Activated CD4-positive, alpha-beta T cell treated with anti-CD3 and anti-CD28 coated beads, Interleukin-2, amount 10 ng/mL, durations not matched to agents 24 days and 14 days (primary cell): ENCODE measurements at regions of chr13 and their contacts with region 1.

Region 1: DNA sequence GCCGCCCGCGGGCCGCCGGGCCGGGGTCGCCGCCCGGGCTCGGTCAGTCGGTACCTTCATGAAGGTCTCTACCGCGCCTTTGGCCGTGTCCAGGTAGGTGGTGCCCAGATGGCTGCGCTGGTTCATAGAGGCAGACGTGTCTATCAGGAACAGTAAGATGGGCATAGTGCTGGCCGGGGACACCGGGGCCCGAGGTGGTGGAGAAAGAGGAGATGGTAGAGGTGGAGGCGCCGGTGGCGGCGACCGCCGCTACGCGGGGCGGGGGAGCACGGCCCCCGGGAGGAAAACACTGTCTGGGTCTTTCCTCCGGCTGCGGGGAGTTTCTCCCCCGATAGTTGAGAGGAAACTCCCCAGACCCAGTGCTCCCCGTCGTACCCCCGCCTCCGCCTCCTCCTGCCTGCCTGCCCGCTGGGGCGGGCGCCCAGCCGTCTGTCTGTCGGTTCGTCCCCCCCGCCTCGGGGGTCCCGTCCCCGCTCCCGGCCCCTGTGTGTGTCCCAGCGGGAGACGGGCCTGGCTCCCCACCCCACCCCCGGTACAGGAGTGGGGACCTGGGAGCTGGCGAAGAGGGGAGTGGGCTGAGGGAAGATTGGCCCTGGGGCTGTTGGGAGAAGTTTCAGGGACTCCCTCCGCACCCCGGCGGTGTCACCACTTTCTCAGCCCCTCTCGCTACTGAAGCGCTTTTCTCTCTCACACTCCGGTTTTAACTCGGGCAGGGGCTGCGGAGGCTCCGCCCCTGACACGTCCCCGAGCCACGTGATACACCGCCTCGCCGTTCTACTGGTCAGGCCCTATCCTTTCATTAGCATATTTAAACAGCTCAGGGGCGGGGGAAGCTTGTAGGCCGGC is at the start of gene INTS6:
- DNase-seq: peak; percentile 100
- H3K4me3 Mint-ChIP-seq: peak within 1 kb of the TSS; percentile 92
- H3K27ac Mint-ChIP-seq: peak within 1 kb of the TSS; percentile 97
- H3K4me1 Mint-ChIP-seq: peaks cover 31% of the 10 kb centered on the region
- H3K27me3 Mint-ChIP-seq: no peaks in the 10 kb centered on the region
- total RNA-seq, gene INTS6: 63.5 and 68.6 TPM in 2 replicates

Region 2: DNA sequence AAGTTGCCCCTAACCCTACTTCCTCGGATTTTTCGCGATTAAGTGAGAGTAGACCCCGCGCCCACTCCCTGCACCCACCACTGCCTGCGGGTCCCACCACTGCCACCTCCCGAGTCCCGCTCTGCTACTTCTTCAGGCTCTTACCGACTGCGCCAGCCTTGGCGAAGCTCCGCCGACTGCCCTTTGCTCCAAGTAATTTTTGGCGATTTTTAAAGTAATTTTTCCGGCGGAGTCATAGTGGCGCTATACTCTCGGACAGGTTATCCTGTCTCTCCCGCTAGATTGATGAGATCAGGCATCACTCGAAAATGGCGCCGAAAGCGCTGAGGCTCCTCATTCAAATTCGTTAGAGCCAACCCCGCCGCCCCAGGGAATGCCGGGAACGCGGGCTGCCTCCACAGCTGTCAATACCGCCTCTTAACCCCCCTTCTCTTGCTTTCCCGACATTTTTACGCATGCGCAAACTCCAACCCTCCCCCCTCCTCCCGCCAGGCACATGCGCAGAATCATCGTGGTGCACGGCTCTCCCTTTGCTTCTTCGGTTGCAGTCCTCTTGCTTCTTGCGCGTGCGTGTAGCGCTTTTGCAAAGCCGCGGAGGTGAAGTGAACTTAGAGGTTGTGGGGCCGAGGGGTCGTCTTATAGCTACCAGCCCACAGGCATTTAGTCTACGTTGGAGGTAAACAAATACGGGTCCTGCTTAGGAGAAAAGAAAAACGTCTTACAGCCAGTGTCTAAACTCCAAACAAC is 1370.7 kb before region 1 on chr13:
- intact Hi-C with region 1: loop called (anchors 5 kb)
- DNase-seq: peak; percentile 99
- H3K4me3 Mint-ChIP-seq: peak overlapping the region; percentile 100
- H3K27ac Mint-ChIP-seq: peak overlapping the region; percentile 100
- H3K4me1 Mint-ChIP-seq: peaks cover 45% of the 10 kb centered on the region
- H3K27me3 Mint-ChIP-seq: peaks cover 5% of the 10 kb centered on the region

Region 3: DNA sequence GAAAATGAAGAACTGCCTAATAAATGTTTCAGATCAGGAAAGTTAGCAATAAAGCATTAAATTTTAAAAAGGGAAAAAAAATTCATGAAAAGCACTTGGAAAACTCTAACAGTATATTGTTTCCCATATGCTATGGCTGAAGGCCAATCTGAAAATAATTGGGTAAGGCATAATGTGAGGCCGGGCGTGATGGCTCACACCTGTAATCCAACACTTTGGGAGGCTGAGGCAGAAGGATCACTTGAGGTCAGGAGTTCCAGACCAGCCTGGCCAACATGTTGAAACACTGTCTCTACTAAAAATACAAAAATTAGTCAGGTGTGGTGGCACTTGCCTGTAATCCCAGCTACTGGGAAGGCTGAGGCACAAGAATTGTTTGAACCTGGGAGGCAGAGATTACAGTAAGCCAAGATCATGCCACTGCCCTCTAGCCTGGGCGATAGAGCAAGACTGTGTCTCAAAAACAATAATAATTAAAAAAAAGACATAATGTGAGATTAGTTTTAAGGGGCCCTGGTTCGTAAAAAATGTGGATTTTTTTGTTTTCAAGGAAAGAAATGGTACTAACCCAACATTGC is 14.9 kb before region 1 on chr13:
- intact Hi-C with region 1: loop called (anchors 2 kb)
- DNase-seq: no peak
- H3K4me3 Mint-ChIP-seq: no peak overlapping the region
- H3K27ac Mint-ChIP-seq: no peak overlapping the region
- H3K4me1 Mint-ChIP-seq: peaks cover 5% of the 10 kb centered on the region
- H3K27me3 Mint-ChIP-seq: no peaks in the 10 kb centered on the region

Region 4: GRCh38 chr13:51729866-51730546 is 277.4 kb after region 1 on chr13:
- intact Hi-C with region 1: loop called (anchors 5 kb)
- DNase-seq: peak; percentile 74
- H3K4me3 Mint-ChIP-seq: no peak overlapping the region
- H3K27ac Mint-ChIP-seq: no peak overlapping the region
- H3K4me1 Mint-ChIP-seq: peaks cover 11% of the 10 kb centered on the region
- H3K27me3 Mint-ChIP-seq: no peaks in the 10 kb centered on the region

Region 5: GRCh38 chr13:51803422-51804294 is 351.1 kb after region 1 on chr13 and contains the start of gene DHRS12:
- intact Hi-C with region 1: loop called (anchors 1 kb)
- DNase-seq: peak; percentile 95
- H3K4me3 Mint-ChIP-seq: peak within 1 kb of the TSS; percentile 97
- H3K27ac Mint-ChIP-seq: peak within 1 kb of the TSS; percentile 98
- H3K4me1 Mint-ChIP-seq: peaks cover 39% of the 10 kb centered on the region
- H3K27me3 Mint-ChIP-seq: no peaks in the 10 kb centered on the region
- total RNA-seq, gene DHRS12: 3.2 and 3.9 TPM in 2 replicates

Region 6: DNA sequence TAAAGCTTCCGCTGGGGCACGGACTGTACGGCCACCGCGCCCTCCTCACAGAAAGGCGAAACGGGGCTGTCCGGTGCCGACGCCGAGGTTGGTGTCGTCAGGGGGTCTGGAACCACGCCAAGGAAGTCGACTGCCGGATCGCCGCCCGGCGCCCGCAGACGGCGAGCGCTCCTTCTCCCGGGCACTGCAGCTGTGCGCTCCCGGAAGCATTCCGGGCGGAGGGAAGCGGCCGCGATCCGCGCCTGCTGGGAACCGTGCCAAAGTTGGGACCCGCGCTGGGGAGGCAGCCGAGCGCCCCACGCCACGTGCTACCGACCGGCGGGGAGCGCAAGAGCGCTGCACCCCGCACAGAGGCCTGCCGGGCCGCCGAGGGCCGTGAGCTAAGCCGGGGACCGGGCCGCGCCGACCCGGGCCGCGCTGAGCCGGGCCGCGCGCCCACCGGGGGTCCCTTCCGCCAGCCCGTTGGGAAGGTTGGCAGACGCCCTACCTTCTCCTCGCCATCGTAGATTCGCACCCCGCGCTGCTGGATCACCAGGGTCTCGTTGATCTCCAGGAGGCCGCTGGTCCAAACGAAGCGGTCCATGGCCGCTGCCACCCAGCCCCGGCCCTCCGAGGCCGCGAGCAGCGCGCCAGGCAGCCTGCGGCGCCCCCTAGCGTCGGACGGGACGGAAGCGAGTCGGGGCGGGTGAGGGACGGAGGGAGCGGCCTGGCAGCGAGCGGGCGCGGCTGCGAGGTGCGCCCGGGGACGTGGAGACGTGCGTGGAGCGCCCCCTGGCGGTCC is 997.6 kb after region 1 on chr13 and contains the start of gene VPS36:
- intact Hi-C with region 1: loop called (anchors 1 kb)
- DNase-seq: peak; percentile 99
- H3K4me3 Mint-ChIP-seq: peak within 1 kb of the TSS; percentile 93
- H3K27ac Mint-ChIP-seq: peak within 1 kb of the TSS; percentile 92
- H3K4me1 Mint-ChIP-seq: peaks cover 33% of the 10 kb centered on the region
- H3K27me3 Mint-ChIP-seq: no peaks in the 10 kb centered on the region
- total RNA-seq, gene VPS36: 42.0 and 43.0 TPM in 2 replicates